Colonic mucosa (tissue), 4 donors: ENCODE measurements at regions of chr7 and their contacts with region 1.

Region 1: GRCh38 chr7:118104812-118105441 is 79.0 kb upstream of the LSM8 start:
- DNase-seq: no peak
- H3K4me3 ChIP-seq: no peak overlapping the region
- H3K27ac ChIP-seq: no peak overlapping the region
- H3K4me1 ChIP-seq: no peaks in the 10 kb centered on the region
- H3K27me3 ChIP-seq: no peaks in the 10 kb centered on the region
- CTCF ChIP-seq: peak; percentile 29

Region 2: GRCh38 chr7:117750612-117751563 is 354.0 kb before region 1 on chr7:
- intact Hi-C with region 1: loop called (anchors 5 kb)
- DNase-seq: no peak
- H3K4me3 ChIP-seq: no peak overlapping the region
- H3K27ac ChIP-seq: no peak overlapping the region
- H3K4me1 ChIP-seq: no peaks in the 10 kb centered on the region
- H3K27me3 ChIP-seq: no peaks in the 10 kb centered on the region
- CTCF ChIP-seq: peak; percentile 43